ENCODE measurements at regions of chr7 and their contacts with region 1.

Region 1: DNA sequence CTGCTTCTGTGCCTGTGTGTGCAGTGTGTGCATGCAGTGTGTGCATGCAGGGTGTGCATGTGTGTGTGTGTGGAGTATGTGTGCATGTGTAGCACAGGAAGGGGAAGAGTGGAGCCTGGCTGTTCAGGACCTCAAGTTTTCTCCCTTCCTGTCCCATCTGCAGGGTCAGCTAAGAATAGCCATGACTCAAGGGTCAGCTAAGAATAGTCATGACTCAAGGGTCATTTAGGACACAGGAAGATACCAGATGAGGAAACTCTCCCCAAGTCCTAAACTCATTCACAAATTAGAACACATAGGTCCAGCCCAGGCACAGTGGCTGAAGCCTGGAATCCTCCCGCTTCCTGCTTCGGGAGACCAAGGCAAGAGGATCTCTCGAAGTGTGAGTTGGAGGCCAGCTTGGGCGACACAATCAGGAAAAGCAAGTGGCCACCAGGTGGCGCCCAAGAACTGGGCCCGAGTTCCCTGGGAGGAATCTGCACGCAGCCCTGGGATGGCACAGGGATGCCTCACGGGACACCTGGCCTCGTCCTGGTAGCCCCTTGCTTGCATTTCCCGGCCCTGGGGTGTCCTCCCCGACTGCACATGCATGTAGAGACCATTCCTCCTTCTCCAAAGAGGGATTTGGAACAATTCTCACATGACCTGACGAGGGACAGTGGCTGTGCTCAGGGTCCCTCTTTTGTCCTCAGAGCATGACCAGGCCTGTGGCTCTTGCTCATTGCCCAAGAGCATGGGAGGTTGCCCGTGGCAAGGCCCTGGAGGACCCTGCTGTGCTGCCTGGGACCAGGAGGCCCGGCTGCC is 21.4 kb upstream of the VOPP1 start:
- DNase-seq: peak; percentile 40 to 82 (median 68)
- ATAC-seq: peak; percentile 51
- H3K4me3 ChIP-seq: no peak overlapping the region
- H3K4me3 Mint-ChIP-seq: no peak overlapping the region
- H3K27ac ChIP-seq: no peak overlapping the region
- H3K27ac Mint-ChIP-seq: no peak overlapping the region
- H3K4me1 ChIP-seq: peaks cover 5% of the 10 kb centered on the region
- H3K4me1 Mint-ChIP-seq: peaks cover 7% of the 10 kb centered on the region
- H3K27me3 ChIP-seq: peaks cover 0 to 3% of the 10 kb centered on the region in 2 experiments
- H3K27me3 Mint-ChIP-seq: peaks cover 2% of the 10 kb centered on the region
- CTCF ChIP-seq: peak; percentile 73

Region 2: DNA sequence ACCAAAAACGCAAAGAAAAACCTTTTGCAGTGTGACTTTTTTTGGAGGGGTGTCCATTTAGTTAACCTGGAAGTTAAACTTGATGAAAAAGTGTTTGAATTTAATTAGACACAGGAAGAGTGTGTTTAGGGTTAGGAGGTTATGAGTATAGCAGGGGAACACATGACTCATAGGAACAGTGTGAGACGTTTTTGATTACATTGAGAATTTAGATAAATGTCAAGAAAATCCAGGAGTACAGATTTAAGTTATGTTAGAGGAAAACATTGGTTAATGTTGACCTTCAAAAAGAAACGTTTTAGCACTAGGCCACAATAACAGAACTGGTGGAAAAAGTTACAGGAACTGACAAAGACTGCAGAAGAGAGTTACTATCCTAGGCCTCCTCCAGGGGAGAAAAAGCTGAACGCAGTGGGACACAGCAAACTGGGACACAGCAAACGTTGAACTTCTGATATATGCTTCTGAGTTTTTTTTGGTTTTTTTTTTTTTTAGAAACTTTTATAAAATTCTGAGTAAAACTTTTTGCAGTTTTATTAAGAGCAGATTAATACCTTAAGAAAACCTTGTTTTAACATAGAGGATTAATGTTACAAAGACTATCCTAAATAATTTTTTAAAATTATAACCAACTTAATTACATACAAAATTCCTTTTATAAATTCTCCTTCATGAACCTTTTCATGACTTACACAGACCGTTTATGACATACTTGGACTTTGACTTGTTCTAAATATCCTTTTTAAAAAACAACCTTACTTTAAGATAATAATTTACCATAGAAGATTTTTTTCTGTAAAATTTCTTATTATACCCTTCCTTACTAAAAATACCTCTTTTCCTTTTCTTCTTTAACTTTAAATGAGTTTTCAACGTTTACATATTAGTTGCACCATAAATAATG is 206.4 kb before region 1 on chr7:
- CTCF ChIA-PET with region 1: no interaction called
- POLR2A ChIA-PET with region 1: no interaction called
- intact Hi-C with region 1: no loop called
- DNase-seq: no peak
- ATAC-seq: no peak
- H3K4me3 ChIP-seq: no peak overlapping the region
- H3K4me3 Mint-ChIP-seq: no peak overlapping the region
- H3K27ac ChIP-seq: no peak overlapping the region
- H3K27ac Mint-ChIP-seq: no peak overlapping the region
- H3K4me1 ChIP-seq: no peaks in the 10 kb centered on the region
- H3K4me1 Mint-ChIP-seq: peaks cover 2% of the 10 kb centered on the region
- H3K27me3 ChIP-seq: no peaks in the 10 kb centered on the region
- H3K27me3 Mint-ChIP-seq: no peaks in the 10 kb centered on the region
- CTCF ChIP-seq: no peak

Region 3: DNA sequence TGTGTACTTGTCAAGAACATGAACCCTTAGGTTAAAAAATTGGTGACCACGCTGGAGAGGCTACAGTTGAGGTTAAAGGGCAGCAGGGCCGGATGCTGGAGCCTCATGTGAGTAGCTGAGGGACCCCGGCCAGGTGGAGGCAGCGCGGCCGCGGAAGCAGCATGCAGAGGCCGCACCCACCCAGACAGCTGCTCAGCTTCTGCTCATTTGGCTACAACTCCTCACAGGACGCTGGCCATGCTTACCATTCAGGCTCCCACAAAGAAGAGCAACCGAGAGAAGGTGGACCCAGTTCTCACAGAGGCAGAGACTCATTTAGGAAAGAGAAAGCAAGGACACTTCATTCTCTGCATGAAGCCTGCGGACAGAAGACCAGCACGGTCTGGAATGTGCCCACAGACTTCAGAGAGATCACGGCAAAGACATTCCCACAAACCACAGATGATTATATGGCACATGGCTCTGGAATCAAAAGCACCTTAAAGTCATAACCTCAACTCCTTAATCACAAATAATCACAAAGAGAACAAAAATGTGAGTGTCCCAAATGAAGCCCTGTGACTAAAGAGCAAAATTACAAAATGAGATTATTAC is 115.8 kb before region 1 on chr7:
- CTCF ChIA-PET with region 1: interaction called, 3 read pairs
- POLR2A ChIA-PET with region 1: no interaction called
- intact Hi-C with region 1: loop called in 1 of 2 experiments (anchors 1 kb)
- DNase-seq: peak in 1 of 9 experiments; percentile 45
- ATAC-seq: no peak
- H3K4me3 ChIP-seq: no peak overlapping the region
- H3K4me3 Mint-ChIP-seq: no peak overlapping the region
- H3K27ac ChIP-seq: no peak overlapping the region
- H3K27ac Mint-ChIP-seq: peak overlapping the region; percentile 49
- H3K4me1 ChIP-seq: peaks cover 62% of the 10 kb centered on the region
- H3K4me1 Mint-ChIP-seq: peaks cover 83% of the 10 kb centered on the region
- H3K27me3 ChIP-seq: no peaks in the 10 kb centered on the region
- H3K27me3 Mint-ChIP-seq: no peaks in the 10 kb centered on the region
- CTCF ChIP-seq: no peak